ENCODE measurements at regions of chr13 and their contacts with region 1.

Region 1: GRCh38 chr13:25847145-25847544 is 204.7 kb downstream of the SHISA2 start:
- DNase-seq: peak; percentile 18
- H3K4me3 Mint-ChIP-seq: no peak overlapping the region
- H3K27ac Mint-ChIP-seq: no peak overlapping the region
- H3K4me1 Mint-ChIP-seq: peaks cover 29% of the 10 kb centered on the region
- H3K27me3 Mint-ChIP-seq: no peaks in the 10 kb centered on the region

Region 2: DNA sequence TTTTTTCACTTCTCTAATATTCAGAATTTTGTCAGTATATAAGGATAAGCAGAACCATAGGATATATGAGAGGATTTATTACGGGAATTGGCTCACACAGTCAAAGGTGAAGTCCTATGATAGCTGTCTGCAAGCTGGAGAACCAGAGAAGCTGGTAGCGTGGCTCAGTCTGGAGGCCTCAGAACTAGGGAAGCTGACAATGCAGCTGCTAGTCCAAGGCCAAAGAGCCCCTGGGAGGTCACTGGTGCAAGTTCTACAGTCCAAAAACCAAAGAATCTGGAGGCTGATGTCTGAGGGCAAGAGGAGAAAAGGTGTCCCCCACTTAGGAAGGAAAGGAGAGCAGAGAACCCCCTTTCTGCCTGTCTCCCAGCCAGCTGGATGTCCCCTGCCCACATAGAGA is 968.8 kb before region 1 on chr13:
- CTCF ChIA-PET with region 1: no interaction called
- POLR2A ChIA-PET with region 1: no interaction called
- intact Hi-C with region 1: no loop called
- DNase-seq: no peak
- H3K4me3 Mint-ChIP-seq: no peak overlapping the region
- H3K27ac Mint-ChIP-seq: no peak overlapping the region
- H3K4me1 Mint-ChIP-seq: no peaks in the 10 kb centered on the region
- H3K27me3 Mint-ChIP-seq: peaks cover 14% of the 10 kb centered on the region

Region 3: DNA sequence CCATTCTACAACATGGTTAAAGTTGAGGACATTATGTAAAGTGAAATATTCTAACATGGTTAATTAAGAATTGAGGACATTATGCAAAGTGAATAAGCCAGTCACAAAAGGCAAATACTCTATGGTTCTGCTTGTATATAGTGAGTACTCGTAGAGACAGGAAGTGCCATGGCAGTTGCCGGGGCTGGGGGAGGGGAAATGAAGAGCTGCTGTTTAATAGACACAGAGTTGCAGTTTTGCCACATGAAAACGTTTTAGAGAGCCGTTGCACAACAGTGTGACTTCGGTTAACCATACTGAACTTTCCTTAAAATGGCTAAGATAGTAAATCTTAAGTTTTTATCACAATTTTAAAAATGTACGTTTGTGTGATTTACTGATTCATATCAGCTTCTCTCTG is 27.8 kb after region 1 on chr13:
- CTCF ChIA-PET with region 1: interaction called, 3 read pairs
- POLR2A ChIA-PET with region 1: no interaction called
- intact Hi-C with region 1: loop called (anchors 1 kb)
- DNase-seq: peak; percentile 74
- H3K4me3 Mint-ChIP-seq: no peak overlapping the region
- H3K27ac Mint-ChIP-seq: peak overlapping the region; percentile 4
- H3K4me1 Mint-ChIP-seq: peaks cover 63% of the 10 kb centered on the region
- H3K27me3 Mint-ChIP-seq: no peaks in the 10 kb centered on the region

Region 4: DNA sequence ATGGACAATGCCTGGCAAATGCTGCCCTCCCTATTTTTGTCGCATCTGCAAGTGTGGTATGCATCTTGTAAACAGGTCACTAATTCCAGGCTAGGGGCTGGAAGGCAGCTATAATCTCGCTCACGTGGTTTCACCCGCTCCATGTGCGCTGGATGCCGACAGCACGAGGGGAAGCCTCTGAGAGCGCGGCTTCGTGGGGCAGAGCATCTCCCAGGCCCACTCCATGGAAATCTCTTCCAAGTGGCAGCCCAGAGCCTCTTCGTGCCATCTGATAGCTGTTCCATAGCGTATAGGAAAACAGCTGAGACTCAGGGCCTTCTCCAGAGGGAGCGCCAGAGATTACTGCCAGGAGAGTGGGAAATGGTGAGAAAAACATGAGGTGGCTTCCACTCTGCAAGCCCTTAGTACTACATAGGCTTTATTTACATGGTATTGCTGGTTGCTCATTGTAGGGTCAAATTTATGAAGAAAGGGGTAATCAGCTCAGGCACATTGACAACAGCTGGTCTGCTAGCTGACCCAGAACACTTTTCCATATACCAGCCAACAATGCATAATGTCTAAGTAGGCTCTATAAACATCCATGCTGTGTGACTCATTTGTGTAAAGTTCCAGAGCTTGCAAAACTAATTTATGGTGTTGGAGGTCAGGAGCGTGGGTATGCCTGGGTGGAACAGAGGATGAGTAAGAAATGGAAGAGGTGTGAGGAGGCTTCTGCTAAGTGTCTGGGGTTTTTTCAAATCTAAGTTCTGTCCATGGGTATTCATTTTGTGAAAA is 39.5 kb after region 1 on chr13:
- CTCF ChIA-PET with region 1: no interaction called
- POLR2A ChIA-PET with region 1: no interaction called
- intact Hi-C with region 1: loop called (anchors 1 kb)
- DNase-seq: peak; percentile 62
- H3K4me3 Mint-ChIP-seq: no peak overlapping the region
- H3K27ac Mint-ChIP-seq: no peak overlapping the region
- H3K4me1 Mint-ChIP-seq: peaks cover 51% of the 10 kb centered on the region
- H3K27me3 Mint-ChIP-seq: no peaks in the 10 kb centered on the region

Region 5: DNA sequence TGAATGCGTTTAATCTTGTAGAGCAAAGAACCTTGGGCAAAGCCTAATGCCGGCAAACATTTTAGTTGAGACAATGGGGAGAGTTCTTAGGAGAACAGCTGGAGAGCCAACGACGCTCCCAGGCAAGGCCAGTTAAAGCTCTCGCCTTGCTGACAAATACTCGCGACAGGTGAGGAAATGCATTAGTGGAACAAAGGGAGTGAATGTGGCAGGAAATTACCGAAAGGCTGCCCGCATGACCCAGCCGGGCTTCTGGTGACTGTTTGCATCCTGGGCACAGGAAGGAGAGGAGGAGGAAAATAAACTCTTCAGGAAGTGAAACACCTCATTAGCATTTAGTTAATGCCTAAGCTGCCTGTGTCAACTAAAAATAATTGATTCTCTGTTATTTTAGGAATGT is 130.1 kb after region 1 on chr13:
- CTCF ChIA-PET with region 1: no interaction called
- POLR2A ChIA-PET with region 1: no interaction called
- intact Hi-C with region 1: loop called (anchors 10 kb)
- DNase-seq: no peak
- H3K4me3 Mint-ChIP-seq: no peak overlapping the region
- H3K27ac Mint-ChIP-seq: no peak overlapping the region
- H3K4me1 Mint-ChIP-seq: peaks cover 36% of the 10 kb centered on the region
- H3K27me3 Mint-ChIP-seq: no peaks in the 10 kb centered on the region

Region 6: GRCh38 chr13:26051657-26052311 is 204.6 kb after region 1 on chr13 and contains the start of gene SHISA2:
- CTCF ChIA-PET with region 1: no interaction called
- POLR2A ChIA-PET with region 1: no interaction called
- intact Hi-C with region 1: loop called (anchors 2 kb)
- DNase-seq: peak; percentile 44
- H3K4me3 Mint-ChIP-seq: peak within 1 kb of the TSS; percentile 58
- H3K27ac Mint-ChIP-seq: no peak within 1 kb of the TSS
- H3K4me1 Mint-ChIP-seq: peaks cover 19% of the 10 kb centered on the region
- H3K27me3 Mint-ChIP-seq: peaks cover 27% of the 10 kb centered on the region
- total RNA-seq, gene SHISA2: 0.17 TPM in 1 of 2 experiments, not detected in the other

Measured in activated CD4-positive, alpha-beta memory T cell treated with anti-CD3 and anti-CD28 coated beads for 36 hours (primary cell).